Endothelial cell of umbilical vein (primary cell): ENCODE measurements at regions of chr13 and their contacts with region 1.

Region 1: GRCh38 chr13:52713894-52714293 is 25.7 kb downstream of the CNMD start:
- DNase-seq: no peak
- H3K4me3 ChIP-seq: no peak overlapping the region
- H3K27ac ChIP-seq: no peak overlapping the region
- H3K4me1 ChIP-seq: no peaks in the 10 kb centered on the region
- H3K27me3 ChIP-seq: peaks cover 3% of the 10 kb centered on the region in 2 experiments
- CTCF ChIP-seq: no peak
- POLR2A ChIP-seq: no peak

Region 2: DNA sequence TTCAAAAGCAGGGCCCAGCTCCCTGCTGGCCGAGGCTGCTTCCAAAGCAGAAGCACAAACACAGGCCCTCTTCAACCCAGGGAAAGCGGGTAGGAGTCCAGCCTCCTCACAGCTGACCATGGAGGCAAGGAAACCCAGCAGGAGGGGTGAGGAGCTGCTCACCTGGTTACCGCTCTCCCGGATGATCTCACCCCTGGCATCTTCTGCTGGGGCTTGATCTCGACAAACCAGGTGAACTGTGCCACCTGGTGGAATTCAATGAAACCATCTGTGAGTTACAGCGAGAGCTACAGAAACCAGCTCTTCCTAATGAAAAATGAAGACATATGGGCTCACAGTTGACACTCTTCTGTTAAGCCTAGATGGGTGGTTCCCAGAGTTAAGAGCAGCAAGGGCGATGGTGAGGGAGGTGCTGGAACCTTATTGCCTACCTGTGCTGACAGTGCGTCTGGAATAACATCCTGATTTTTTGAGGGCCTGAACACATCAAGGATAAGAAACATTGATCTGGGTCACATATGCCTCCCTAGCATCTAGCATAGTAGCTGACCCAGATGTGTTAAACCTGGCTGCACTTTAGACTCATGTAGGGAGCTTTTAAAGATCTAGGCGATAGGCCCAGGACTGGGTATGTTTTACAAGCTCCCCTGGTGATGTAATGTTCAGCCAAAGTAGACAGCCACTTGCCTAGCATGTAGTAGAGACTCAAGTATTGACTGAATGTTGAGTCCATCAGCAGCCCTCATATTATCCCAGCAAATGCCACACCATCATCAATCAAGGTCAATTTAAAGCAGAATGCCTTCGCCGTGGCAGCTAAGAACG is 916.0 kb before region 1 on chr13:
- CTCF ChIA-PET with region 1: no interaction called
- POLR2A ChIA-PET with region 1: no interaction called
- dilution Hi-C with region 1: no loop called
- intact Hi-C with region 1: no loop called
- DNase-seq: peak; percentile 36
- H3K4me3 ChIP-seq: no peak overlapping the region
- H3K27ac ChIP-seq: no peak overlapping the region
- H3K4me1 ChIP-seq: peaks cover 24% of the 10 kb centered on the region
- H3K27me3 ChIP-seq: no peaks in the 10 kb centered on the region
- CTCF ChIP-seq: peak; percentile 16 to 27
- POLR2A ChIP-seq: no peak

Region 3: GRCh38 chr13:51895906-51896888 is 817.7 kb before region 1 on chr13:
- CTCF ChIA-PET with region 1: no interaction called
- POLR2A ChIA-PET with region 1: no interaction called
- dilution Hi-C with region 1: no loop called
- intact Hi-C with region 1: loop called (anchors 5 kb)
- DNase-seq: peak; percentile 63
- H3K4me3 ChIP-seq: no peak overlapping the region
- H3K27ac ChIP-seq: no peak overlapping the region
- H3K4me1 ChIP-seq: no peaks in the 10 kb centered on the region
- H3K27me3 ChIP-seq: peaks cover 13 to 23% of the 10 kb centered on the region in 2 experiments
- CTCF ChIP-seq: peak; percentile 59 to 77
- POLR2A ChIP-seq: no peak